ENCODE measurements at regions of chr4 and their contacts with region 1.

Region 1: DNA sequence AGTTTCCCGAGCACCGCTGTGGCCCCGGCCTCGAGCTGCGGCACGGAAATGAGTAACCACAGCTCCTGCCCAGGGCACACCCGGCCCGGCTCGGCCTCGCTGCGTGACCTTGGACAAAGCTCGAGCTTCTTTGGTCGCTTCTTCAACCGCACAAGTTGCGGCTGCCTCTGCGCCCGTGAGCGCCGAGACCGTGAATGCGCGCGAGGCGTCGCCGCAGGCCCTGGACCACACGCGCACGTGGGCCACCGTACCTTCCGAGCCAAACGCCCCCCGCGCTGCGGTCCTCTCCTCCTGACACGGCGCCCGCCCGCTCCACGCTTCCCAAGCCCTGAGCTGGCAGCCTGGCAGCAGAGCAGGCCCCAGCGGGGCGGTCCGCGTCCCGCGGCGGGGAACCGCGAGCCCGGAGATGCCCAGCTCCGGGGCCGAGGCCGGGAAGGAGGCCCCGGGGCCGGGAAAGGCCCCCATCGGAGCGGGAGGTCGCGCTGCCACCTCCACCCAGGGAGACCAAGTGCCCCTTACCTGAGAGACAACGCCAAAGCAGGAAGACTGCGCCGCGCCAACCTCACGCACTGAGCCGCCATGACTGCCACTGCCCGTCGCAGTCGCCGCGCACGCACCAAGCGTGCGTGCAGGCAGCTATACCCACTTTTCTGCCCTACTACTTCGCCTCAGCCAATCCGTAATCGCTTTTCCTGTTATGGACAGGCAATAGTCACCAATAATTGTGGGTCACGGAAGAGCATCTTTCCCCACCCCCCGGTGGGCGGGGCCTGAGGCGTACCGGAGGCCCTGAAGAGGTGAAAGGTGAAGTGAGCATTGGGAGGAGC is at the start of gene GRPEL1:
- DNase-seq: peak; percentile 98
- ATAC-seq: peak; percentile 88
- H3K4me3 ChIP-seq: peak within 1 kb of the TSS; percentile 91 to 93
- H3K27ac ChIP-seq: peak within 1 kb of the TSS; percentile 78
- H3K4me1 ChIP-seq: peaks cover 11 to 28% of the 10 kb centered on the region in 2 experiments; a peak in 3 of 4 replicates
- H3K27me3 ChIP-seq: no peaks in the 10 kb centered on the region
- CTCF ChIP-seq: no peak
- POLR2A ChIP-seq: peak; percentile 96
- RAD21 ChIP-seq: no peak
- total RNA-seq, gene GRPEL1: 80.1 TPM

Region 2: GRCh38 chr4:6716018-6716911 is 351.4 kb before region 1 on chr4 and contains the start of gene BLOC1S4:
- CTCF ChIA-PET with region 1: interaction called, 7 read pairs
- POLR2A ChIA-PET with region 1: no interaction called
- RAD21 ChIA-PET with region 1: no interaction called
- intact Hi-C with region 1: loop called (anchors 1 kb)
- DNase-seq: peak; percentile 81
- ATAC-seq: peak; percentile 82
- H3K4me3 ChIP-seq: peak within 1 kb of the TSS; percentile 79 to 83
- H3K27ac ChIP-seq: peak within 1 kb of the TSS; percentile 93
- H3K4me1 ChIP-seq: peaks cover 4 to 20% of the 10 kb centered on the region in 2 experiments; a peak in 3 of 4 replicates
- H3K27me3 ChIP-seq: no peaks in the 10 kb centered on the region
- CTCF ChIP-seq: no peak
- POLR2A ChIP-seq: peak; percentile 32
- RAD21 ChIP-seq: no peak
- total RNA-seq, gene BLOC1S4: 15.7 TPM

Region 3: GRCh38 chr4:6974138-6974848 is 93.4 kb before region 1 on chr4:
- CTCF ChIA-PET with region 1: interaction called, 10 read pairs
- POLR2A ChIA-PET with region 1: no interaction called
- RAD21 ChIA-PET with region 1: no interaction called
- intact Hi-C with region 1: loop called (anchors 1 kb)
- DNase-seq: peak; percentile 70
- ATAC-seq: peak; percentile 90
- H3K4me3 ChIP-seq: no peak overlapping the region
- H3K27ac ChIP-seq: no peak overlapping the region
- H3K4me1 ChIP-seq: peaks cover 3% of the 10 kb centered on the region in 2 experiments; a peak in 1 of 4 replicates
- H3K27me3 ChIP-seq: no peaks in the 10 kb centered on the region
- CTCF ChIP-seq: peak; percentile 75 to 98 (median 87)
- POLR2A ChIP-seq: no peak
- RAD21 ChIP-seq: peak; percentile 79

Region 4: DNA sequence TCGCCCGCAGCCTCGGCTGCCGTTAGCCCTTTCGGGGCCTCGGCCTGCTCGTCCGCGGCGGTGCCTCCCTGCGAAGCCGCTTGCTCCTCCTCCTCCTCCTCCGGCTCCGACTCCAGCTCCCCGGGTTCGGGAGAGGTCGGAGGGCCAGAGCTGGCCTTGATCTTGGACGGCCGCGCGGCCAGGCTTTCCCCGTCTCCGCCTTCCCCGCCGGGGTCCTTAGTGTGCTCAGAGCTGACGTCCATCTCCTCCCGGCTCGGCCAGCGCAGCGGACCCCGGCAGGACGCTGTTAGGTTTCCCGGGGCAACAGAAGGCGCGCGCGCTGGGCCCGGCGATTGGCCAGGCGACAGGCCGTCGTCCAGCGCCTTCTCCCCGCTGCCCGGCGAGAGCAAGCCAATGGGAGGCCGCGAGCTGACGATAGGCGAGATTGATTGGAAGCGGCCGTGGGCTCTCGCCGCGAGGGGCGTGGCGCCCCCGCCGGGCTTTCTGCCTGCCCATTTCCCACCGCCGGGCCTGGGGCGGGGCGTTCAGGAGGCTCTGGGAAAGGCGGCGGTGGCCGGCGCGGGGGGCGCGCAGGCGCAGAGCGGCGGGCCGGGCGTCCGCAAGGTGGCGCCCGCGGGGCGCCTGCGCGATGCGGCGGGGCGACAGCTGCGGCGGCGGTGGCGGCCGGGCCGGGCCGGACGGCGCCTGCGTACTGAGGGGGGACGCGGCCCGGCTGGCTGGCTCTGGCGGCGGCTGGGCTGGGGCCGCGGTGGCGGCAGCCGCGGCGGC is 24.8 kb before region 1 on chr4 and contains the start of gene TADA2B:
- CTCF ChIA-PET with region 1: interaction called, 12 read pairs
- POLR2A ChIA-PET with region 1: interaction called, 4 read pairs
- RAD21 ChIA-PET with region 1: no interaction called
- intact Hi-C with region 1: no loop called
- DNase-seq: peak; percentile 91
- ATAC-seq: peak; percentile 91
- H3K4me3 ChIP-seq: peak within 1 kb of the TSS; percentile 69 to 94
- H3K27ac ChIP-seq: peak within 1 kb of the TSS; percentile 84
- H3K4me1 ChIP-seq: peaks cover 12 to 22% of the 10 kb centered on the region in 2 experiments; a peak in 2 of 4 replicates
- H3K27me3 ChIP-seq: no peaks in the 10 kb centered on the region
- CTCF ChIP-seq: 0 out of 6 replicates have a peak, but pooled peaks of 2 of the 3 experiments have one; percentile 10 to 13
- POLR2A ChIP-seq: no peak
- RAD21 ChIP-seq: no peak
- total RNA-seq, gene TADA2B: 13.4 TPM